Esophagus muscularis mucosa (tissue), 4 donors: ENCODE measurements at regions of chr12 and their contacts with region 1.

Region 1: DNA sequence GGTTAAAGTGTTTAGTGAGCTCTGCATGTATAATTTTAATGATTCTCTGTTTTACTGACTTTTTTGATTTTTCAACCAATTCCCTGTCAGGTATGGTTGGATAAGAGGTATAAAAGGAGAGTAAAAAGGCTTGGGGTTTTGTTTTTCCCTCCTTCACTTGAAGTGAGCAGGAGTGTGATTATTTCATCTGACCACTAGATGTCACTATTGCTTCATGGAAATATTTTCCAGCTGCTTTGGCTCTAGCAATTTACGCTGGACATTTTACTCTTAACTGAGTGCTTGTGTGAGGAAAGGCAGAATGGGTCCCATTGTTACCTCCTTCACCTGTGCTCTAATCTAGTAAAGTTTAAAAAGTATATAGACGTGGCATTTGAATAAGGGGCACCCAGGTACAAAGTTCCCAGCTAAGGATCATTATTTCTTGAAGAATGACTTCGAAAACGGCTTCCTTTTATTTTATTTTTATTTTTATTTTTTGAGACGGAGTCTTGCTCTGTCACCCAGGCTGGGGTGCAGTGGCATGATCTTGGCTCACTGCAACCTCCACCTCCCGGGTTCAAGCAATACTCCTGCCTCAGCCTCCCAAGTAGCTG is 66.5 kb downstream of the TBC1D30 start:
- DNase-seq: no peak
- H3K4me3 ChIP-seq: no peak overlapping the region
- H3K27ac ChIP-seq: no peak overlapping the region
- H3K4me1 ChIP-seq: no peaks in the 10 kb centered on the region
- H3K27me3 ChIP-seq: peaks cover 0 to 4% (median 0%) of the 10 kb centered on the region in 4 donors
- CTCF ChIP-seq: peak; percentile 79 to 83 (median 80)
- EP300 ChIP-seq: no peak
- POLR2A ChIP-seq: no peak

Region 2: GRCh38 chr12:65121049-65121955 is 230.3 kb after region 1 on chr12 and contains the start of gene WIF1:
- intact Hi-C with region 1: loop called (anchors 10 kb)
- DNase-seq: no peak
- H3K4me3 ChIP-seq: peak within 1 kb of the TSS; percentile 36 to 52 (median 40)
- H3K27ac ChIP-seq: no peak within 1 kb of the TSS
- H3K4me1 ChIP-seq: peaks cover 8 to 13% (median 11%) of the 10 kb centered on the region in 4 donors
- H3K27me3 ChIP-seq: peaks cover 8 to 81% (median 19%) of the 10 kb centered on the region in 4 donors
- CTCF ChIP-seq: peak in 1 of 3 experiments; percentile 8
- EP300 ChIP-seq: no peak
- POLR2A ChIP-seq: no peak
- total RNA-seq, gene WIF1: 0.11 to 1.2 TPM in 2 of 4 donors, not detected in the others

Region 3: DNA sequence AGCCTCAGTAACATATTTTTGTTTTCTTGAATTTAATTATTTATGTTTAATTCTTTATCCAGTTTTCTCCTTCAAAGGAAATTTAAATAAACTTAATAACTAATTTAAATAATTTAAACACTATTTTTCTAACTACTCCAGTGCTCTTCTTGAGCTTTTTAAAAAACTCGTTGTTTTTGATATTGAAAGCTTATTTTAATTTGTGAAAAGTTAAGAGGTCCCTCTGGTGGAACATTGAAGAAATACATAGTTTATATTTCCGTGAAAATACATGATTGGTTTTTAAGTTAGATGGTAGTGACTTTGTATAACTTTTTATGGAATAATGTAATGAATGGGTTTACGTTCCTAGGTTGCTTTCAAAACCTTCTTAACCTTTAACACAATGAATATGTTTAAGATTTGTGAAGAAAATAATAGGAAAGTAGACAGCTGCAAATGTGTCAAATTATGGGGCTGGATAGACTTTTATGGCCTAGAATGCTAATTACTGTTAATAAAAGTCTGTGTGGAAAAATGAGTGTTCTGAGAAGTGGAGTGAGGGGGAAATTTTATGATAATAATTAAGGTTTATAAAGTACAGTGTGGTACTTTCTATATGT is 341.6 kb after region 1 on chr12:
- intact Hi-C with region 1: loop called (anchors 5 kb)
- DNase-seq: no peak
- H3K4me3 ChIP-seq: no peak overlapping the region
- H3K27ac ChIP-seq: no peak overlapping the region
- H3K4me1 ChIP-seq: peaks cover 0 to 7% (median 2%) of the 10 kb centered on the region in 4 donors
- H3K27me3 ChIP-seq: no peaks in the 10 kb centered on the region
- CTCF ChIP-seq: peak; percentile 31 to 53 (median 53)
- EP300 ChIP-seq: no peak
- POLR2A ChIP-seq: no peak

Region 4: DNA sequence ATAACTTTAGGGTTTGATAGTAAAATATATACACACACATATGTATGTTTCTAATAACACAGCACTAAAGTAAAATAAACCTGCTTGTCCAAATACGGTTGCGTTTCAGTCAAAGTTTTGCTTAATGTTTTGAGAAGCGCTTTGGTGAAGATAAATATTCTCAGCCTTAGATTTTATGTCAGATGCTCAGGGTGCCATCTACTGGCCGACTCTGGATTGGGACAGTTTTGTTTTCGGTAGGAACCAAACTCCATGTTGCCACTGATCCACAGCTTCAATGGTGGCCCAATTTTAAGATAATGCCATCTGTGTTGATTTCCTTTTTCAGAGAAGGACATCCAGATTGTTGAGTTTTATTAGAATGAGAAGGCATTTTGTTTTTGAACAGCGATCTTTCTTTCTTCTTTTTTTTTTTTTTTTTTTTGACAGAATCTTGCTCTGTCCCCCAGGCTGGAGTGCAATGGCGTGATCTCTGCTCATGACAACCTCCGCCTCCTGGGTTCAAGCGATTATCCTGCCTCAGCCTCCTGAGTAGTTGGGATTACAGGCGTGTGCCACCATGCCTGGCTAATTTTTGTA is 1196.5 kb after region 1 on chr12:
- intact Hi-C with region 1: loop called (anchors 5 kb)
- DNase-seq: no peak
- H3K4me3 ChIP-seq: no peak overlapping the region
- H3K27ac ChIP-seq: no peak overlapping the region
- H3K4me1 ChIP-seq: peaks cover 0 to 3% (median 0%) of the 10 kb centered on the region in 4 donors
- H3K27me3 ChIP-seq: no peaks in the 10 kb centered on the region
- CTCF ChIP-seq: peak; percentile 73 to 82 (median 74)
- EP300 ChIP-seq: no peak
- POLR2A ChIP-seq: no peak

Region 5: GRCh38 chr12:66107451-66107915 is 1216.5 kb after region 1 on chr12:
- intact Hi-C with region 1: loop called (anchors 5 kb)
- DNase-seq: no peak
- H3K4me3 ChIP-seq: no peak overlapping the region
- H3K27ac ChIP-seq: no peak overlapping the region
- H3K4me1 ChIP-seq: peaks cover 0 to 4% (median 0%) of the 10 kb centered on the region in 4 donors
- H3K27me3 ChIP-seq: no peaks in the 10 kb centered on the region
- CTCF ChIP-seq: peak; percentile 75 to 91 (median 76)
- EP300 ChIP-seq: no peak
- POLR2A ChIP-seq: no peak